Heart left ventricle (tissue), 16 donors: ENCODE measurements at regions of chr5 and their contacts with region 1.

Region 1: GRCh38 chr5:122515709-122516431 is 203.8 kb downstream of the SNCAIP start:
- DNase-seq: peak in 3 of 5 donors; percentile 18 to 31 (median 30)
- ATAC-seq: peak in 3 of 4 donors; percentile 79 to 83 (median 82)
- H3K4me3 ChIP-seq: no peak overlapping the region
- H3K27ac ChIP-seq: no peak overlapping the region
- H3K4me1 ChIP-seq: no peaks in the 10 kb centered on the region
- H3K27me3 ChIP-seq: peaks cover 0 to 3% (median 0%) of the 10 kb centered on the region in 9 donors
- CTCF ChIP-seq: peak; percentile 27 to 70 (median 56)
- POLR2A ChIP-seq: no peak

Region 2: DNA sequence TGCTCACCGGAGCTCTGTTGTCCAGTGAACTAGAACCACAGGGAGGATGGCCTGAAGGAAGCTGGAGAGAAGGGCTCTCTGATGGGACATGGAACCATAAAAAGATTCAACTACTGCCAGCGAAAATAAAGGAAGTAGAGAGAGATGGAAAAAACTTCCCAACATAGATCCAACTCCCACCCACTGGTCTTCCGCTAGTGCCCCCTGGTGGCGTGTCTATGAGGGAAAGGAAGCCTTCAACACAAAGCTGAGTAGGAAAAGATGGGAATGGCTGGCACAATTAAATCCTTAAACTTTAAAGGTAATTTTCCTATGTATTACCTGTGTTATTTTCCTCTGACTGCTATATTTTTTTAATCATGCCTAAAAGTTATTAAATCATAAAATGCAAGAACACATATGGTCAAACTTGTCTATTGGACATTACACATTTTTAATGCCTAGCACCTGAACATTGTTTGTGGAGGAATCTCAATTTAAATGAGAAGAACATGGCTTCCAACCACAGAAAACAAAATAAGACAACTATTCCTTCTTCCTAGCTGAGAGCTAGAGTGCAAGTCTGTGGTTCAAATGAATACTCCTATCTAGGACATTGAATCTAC is 855.8 kb after region 1 on chr5:
- intact Hi-C with region 1: loop called in 3 of 10 experiments (anchors 5 to 10 kb)
- DNase-seq: peak in 4 of 5 donors; percentile 15 to 57 (median 44)
- ATAC-seq: no peak
- H3K4me3 ChIP-seq: no peak overlapping the region
- H3K27ac ChIP-seq: no peak overlapping the region
- H3K4me1 ChIP-seq: no peaks in the 10 kb centered on the region
- H3K27me3 ChIP-seq: no peaks in the 10 kb centered on the region
- CTCF ChIP-seq: peak; percentile 20 to 59 (median 44)
- POLR2A ChIP-seq: no peak

Region 3: GRCh38 chr5:123605822-123606221 is 1090.0 kb after region 1 on chr5:
- intact Hi-C with region 1: loop called in 2 of 10 experiments (anchors 5 to 10 kb)
- DNase-seq: no peak
- ATAC-seq: no peak
- H3K4me3 ChIP-seq: no peak overlapping the region
- H3K27ac ChIP-seq: no peak overlapping the region
- H3K4me1 ChIP-seq: peaks cover 0 to 5% (median 0%) of the 10 kb centered on the region in 12 donors
- H3K27me3 ChIP-seq: no peaks in the 10 kb centered on the region
- CTCF ChIP-seq: no peak
- POLR2A ChIP-seq: no peak

Region 4: DNA sequence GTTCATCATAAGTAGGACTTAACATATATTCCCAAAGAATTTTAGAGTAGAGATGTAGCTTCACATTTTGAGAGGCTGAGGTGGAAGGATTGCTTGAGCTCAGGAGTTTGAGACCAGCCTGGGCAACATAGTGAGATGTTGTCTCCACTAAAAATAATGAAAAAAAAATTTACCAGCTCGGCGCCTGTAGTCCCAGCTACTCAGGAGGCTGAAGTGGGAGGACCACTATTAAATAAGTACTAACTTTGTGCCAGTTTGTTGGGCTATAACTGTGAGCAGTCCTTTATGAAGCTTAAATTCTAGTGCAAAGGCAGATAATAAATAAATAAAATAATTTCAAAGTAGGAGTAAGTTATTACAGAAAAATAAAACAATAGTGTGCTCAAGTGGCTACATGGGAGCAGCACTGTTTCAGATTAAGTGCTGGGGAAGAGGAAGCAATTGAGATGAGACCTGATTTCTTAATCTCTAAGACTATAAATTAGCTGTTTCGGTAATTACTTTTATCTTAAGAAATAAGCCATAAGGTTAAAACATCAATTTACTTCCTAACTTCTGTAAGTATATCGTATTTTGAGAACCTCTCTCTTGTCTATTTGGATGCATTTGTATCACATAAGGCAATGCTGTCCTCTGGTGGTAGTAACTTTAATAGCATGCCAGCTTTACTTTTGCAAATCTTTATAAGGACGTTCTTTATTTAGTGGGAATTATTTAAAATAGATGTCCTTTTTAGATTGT is 1095.0 kb after region 1 on chr5:
- intact Hi-C with region 1: loop called in 2 of 10 experiments (anchors 5 to 10 kb)
- DNase-seq: no peak
- ATAC-seq: peak in 3 of 4 donors; percentile 50 to 70 (median 54)
- H3K4me3 ChIP-seq: no peak overlapping the region
- H3K27ac ChIP-seq: no peak overlapping the region
- H3K4me1 ChIP-seq: peaks cover 0 to 7% (median 0%) of the 10 kb centered on the region in 12 donors
- H3K27me3 ChIP-seq: no peaks in the 10 kb centered on the region
- CTCF ChIP-seq: peak; percentile 89 to 99 (median 96)
- POLR2A ChIP-seq: no peak